ENCODE measurements at regions of chr15 and their contacts with region 1.

Region 1: DNA sequence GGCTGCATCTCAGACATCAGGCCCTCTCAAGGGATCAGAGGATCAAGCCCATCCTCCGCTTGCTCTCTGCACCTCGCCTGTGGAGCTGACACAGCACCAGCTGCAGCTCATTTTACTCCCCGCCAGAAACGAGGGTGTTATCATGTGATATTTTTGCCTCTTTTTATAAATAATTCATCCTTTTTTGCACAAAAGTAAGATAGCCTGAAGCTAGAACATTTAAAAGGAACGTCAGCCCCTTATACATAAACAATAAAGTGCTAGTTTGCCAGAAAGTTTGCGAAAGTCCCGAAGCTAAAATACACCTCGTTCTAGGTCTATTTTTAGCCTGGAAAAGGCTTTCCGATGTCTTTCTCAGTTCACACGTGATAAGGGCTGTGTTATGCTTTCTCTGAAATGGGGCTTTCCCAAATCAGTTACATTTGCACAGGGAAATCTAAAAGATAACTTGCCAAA is 9.6 kb upstream of the FAM174B start:
- DNase-seq: peak in 1 of 5 donors; percentile 49
- ATAC-seq: peak; percentile 56 to 71 (median 62)
- H3K4me3 ChIP-seq: peak overlapping the region in 6 of 12 donors; percentile 4 to 38 (median 21)
- H3K27ac ChIP-seq: peak overlapping the region in 10 of 12 donors; percentile 21 to 79 (median 36)
- H3K4me1 ChIP-seq: peaks cover 10 to 46% (median 32%) of the 10 kb centered on the region in 12 donors
- H3K27me3 ChIP-seq: no peaks in the 10 kb centered on the region
- CTCF ChIP-seq: no peak
- POLR2A ChIP-seq: no peak

Region 2: GRCh38 chr15:92617549-92618520 is 47.3 kb before region 1 on chr15:
- intact Hi-C with region 1: loop called in 5 of 10 experiments (anchors 5 to 10 kb)
- DNase-seq: peak; percentile 56 to 85 (median 74)
- ATAC-seq: peak; percentile 86 to 94 (median 90)
- H3K4me3 ChIP-seq: no peak overlapping the region
- H3K27ac ChIP-seq: peak overlapping the region in 11 of 12 donors; percentile 7 to 76 (median 53)
- H3K4me1 ChIP-seq: peaks cover 0 to 36% (median 21%) of the 10 kb centered on the region in 12 donors
- H3K27me3 ChIP-seq: no peaks in the 10 kb centered on the region
- CTCF ChIP-seq: no peak
- POLR2A ChIP-seq: no peak

Region 3: DNA sequence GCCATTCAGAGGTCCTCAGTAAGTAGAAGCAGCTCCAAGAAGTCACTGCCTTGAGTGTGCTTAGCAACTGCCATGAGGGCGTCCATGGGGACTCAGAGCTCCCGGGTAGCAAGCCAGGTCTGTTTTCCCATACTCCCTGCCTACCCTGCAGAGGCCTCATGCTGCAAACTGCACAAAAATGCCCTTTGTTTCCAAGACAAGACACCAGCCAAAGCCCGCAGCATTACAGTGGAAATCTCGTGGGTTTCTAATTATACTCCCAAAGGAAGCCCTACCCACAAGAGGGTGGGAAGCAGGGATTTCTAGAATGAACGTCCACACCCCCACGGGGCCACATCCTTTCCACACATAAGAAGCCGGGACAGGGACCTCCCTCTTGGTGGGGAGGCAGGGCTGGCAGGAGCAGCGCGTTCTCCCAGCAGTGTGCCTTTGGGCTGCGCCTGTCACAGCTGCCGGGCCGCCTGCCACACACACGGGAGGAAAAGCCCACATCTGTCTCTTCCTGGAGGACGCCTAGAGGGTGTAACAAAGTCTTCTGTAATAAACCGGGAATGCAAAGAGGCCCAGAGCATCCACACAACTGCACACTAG is 40.6 kb before region 1 on chr15:
- intact Hi-C with region 1: loop called in 5 of 10 experiments (anchors 5 to 10 kb)
- DNase-seq: peak; percentile 58 to 75 (median 69)
- ATAC-seq: peak; percentile 68 to 87 (median 79)
- H3K4me3 ChIP-seq: peak overlapping the region in 5 of 12 donors; percentile 6 to 15 (median 7)
- H3K27ac ChIP-seq: peak overlapping the region in 11 of 12 donors; percentile 8 to 76 (median 43)
- H3K4me1 ChIP-seq: peaks cover 0 to 40% (median 26%) of the 10 kb centered on the region in 12 donors
- H3K27me3 ChIP-seq: no peaks in the 10 kb centered on the region
- CTCF ChIP-seq: no peak
- POLR2A ChIP-seq: peak in 1 of 2 donors; percentile 16

Region 4: GRCh38 chr15:93265111-93265556 is 600.0 kb after region 1 on chr15:
- intact Hi-C with region 1: no loop called
- DNase-seq: no peak
- ATAC-seq: peak in 2 of 4 donors; percentile 85 to 95
- H3K4me3 ChIP-seq: no peak overlapping the region
- H3K27ac ChIP-seq: no peak overlapping the region
- H3K4me1 ChIP-seq: no peaks in the 10 kb centered on the region
- H3K27me3 ChIP-seq: no peaks in the 10 kb centered on the region
- CTCF ChIP-seq: no peak
- POLR2A ChIP-seq: no peak